ENCODE measurements at regions of chr3 and their contacts with region 1.

Region 1: GRCh38 chr3:170107941-170108340 is 70.1 kb downstream of the GPR160 start:
- DNase-seq: no peak
- ATAC-seq: no peak
- H3K4me3 ChIP-seq: no peak overlapping the region
- H3K4me3 Mint-ChIP-seq: no peak overlapping the region
- H3K27ac ChIP-seq: no peak overlapping the region
- H3K27ac Mint-ChIP-seq: no peak overlapping the region
- H3K4me1 ChIP-seq: peaks cover 10% of the 10 kb centered on the region
- H3K4me1 Mint-ChIP-seq: peaks cover 26% of the 10 kb centered on the region
- H3K27me3 ChIP-seq: no peaks in the 10 kb centered on the region
- H3K27me3 Mint-ChIP-seq: no peaks in the 10 kb centered on the region
- CTCF ChIP-seq: no peak

Region 2: GRCh38 chr3:170089862-170090600 is 17.9 kb before region 1 on chr3:
- CTCF ChIA-PET with region 1: interaction called, 3 read pairs
- POLR2A ChIA-PET with region 1: interaction called, 3 read pairs
- intact Hi-C with region 1: loop called in 1 of 2 experiments (anchors 2 kb)
- DNase-seq: no peak
- ATAC-seq: no peak
- H3K4me3 ChIP-seq: no peak overlapping the region
- H3K4me3 Mint-ChIP-seq: no peak overlapping the region
- H3K27ac ChIP-seq: no peak overlapping the region
- H3K27ac Mint-ChIP-seq: peak overlapping the region; percentile 55
- H3K4me1 ChIP-seq: no peaks in the 10 kb centered on the region
- H3K4me1 Mint-ChIP-seq: peaks cover 10% of the 10 kb centered on the region
- H3K27me3 ChIP-seq: no peaks in the 10 kb centered on the region
- H3K27me3 Mint-ChIP-seq: no peaks in the 10 kb centered on the region
- CTCF ChIP-seq: no peak

Measured in CD8-positive, alpha-beta T cell (primary cell).